PC-3 (cell line): ENCODE measurements at regions of chr5 and their contacts with region 1.

Region 1: GRCh38 chr5:109191153-109191558 is 218.6 kb downstream of the PJA2 start:
- DNase-seq: peak; percentile 54
- ATAC-seq: peak; percentile 73
- H3K4me3 ChIP-seq: no peak overlapping the region
- H3K27ac ChIP-seq: no peak overlapping the region
- H3K4me1 ChIP-seq: peaks cover 11% of the 10 kb centered on the region
- H3K27me3 ChIP-seq: no peaks in the 10 kb centered on the region
- CTCF ChIP-seq: no peak

Region 2: DNA sequence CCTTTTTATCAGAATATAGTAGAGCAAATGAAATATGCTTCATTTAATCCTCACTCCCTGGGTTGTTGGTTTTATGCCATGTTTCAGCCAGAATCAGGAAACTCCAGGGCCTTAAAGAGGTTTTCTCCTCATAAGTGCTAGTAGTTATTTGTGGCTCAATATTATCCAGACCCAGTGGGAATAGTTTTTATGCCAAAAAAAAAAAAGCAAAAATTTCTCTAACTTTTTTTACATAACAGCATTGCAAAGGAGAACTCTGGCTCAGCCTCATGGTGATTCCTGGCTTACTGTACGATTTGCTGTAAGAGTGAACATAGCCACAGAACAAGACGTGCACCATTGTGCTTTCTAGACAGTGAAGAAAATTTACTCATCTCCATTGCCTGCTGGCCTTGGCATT is 13.9 kb before region 1 on chr5:
- CTCF ChIA-PET with region 1: no interaction called
- POLR2A ChIA-PET with region 1: no interaction called
- intact Hi-C with region 1: no loop called
- DNase-seq: no peak
- ATAC-seq: no peak
- H3K4me3 ChIP-seq: no peak overlapping the region
- H3K27ac ChIP-seq: no peak overlapping the region
- H3K4me1 ChIP-seq: no peaks in the 10 kb centered on the region
- H3K27me3 ChIP-seq: no peaks in the 10 kb centered on the region
- CTCF ChIP-seq: no peak

Region 3: DNA sequence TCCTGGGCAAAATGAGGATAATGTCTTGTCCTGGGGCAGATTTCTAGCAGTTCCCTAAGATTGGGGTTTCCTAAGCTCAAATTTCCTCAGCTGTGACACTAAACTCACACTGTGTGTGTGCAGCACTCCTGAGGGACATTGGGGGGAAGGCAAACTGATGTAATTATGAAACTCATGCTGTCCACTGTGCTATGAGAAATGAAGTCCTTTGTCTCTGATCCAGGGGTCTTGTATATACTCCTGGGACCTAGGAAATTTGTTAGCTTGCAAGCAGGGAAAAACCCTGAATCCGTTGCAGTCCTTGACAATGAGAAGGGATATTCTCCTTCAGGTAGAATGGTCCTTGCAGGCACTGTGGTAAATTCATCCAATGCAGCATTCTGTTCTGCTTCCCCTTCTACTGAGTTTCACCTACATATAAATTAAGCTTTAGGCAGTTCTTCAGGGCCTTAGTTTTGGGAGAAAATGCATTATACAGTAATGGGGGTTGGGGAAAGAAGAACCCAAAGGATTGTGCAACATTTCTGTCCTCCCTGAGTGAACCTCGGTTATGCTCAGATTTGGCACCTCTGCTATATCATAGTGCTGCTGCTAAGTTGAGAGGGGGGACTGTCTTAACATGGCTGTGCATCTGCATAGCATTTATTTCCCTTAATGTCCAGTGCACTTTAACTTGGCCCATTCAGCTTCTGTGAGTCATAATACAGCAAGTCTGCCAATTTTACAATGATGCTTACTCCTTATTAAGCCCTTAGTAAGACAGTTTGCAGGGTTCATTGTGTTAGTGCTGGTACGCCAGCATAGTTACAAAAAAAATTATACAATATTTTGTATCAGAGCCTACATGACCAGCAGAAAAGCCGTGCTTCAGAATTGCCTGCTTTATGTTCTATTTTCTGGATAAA is 138.4 kb after region 1 on chr5:
- CTCF ChIA-PET with region 1: no interaction called
- POLR2A ChIA-PET with region 1: no interaction called
- intact Hi-C with region 1: loop called (anchors 5 kb)
- DNase-seq: peak; percentile 65
- ATAC-seq: peak; percentile 77
- H3K4me3 ChIP-seq: no peak overlapping the region
- H3K27ac ChIP-seq: no peak overlapping the region
- H3K4me1 ChIP-seq: peaks cover 17% of the 10 kb centered on the region
- H3K27me3 ChIP-seq: no peaks in the 10 kb centered on the region
- CTCF ChIP-seq: no peak

Region 4: DNA sequence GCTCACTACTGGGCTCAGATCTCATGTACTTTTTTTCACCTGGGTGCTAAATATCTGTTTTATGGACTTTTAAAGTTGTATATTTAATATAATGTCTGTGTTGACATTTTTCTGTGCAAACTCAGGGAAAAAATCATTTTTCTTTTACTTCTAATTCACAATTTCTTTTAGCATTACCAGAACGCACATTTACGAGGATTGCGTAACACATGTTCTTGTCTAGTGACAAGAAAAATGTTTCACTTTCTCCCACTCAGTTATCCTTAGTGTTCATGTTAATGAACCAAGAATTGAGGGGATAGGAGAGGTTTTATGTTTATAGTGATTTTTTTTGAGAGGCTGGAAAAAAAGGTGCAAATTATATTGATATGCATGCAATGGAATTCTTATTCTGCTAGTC is 305.0 kb after region 1 on chr5:
- CTCF ChIA-PET with region 1: no interaction called
- POLR2A ChIA-PET with region 1: no interaction called
- intact Hi-C with region 1: no loop called
- DNase-seq: no peak
- ATAC-seq: no peak
- H3K4me3 ChIP-seq: no peak overlapping the region
- H3K27ac ChIP-seq: no peak overlapping the region
- H3K4me1 ChIP-seq: peaks cover 9% of the 10 kb centered on the region
- H3K27me3 ChIP-seq: no peaks in the 10 kb centered on the region
- CTCF ChIP-seq: no peak

Region 5: DNA sequence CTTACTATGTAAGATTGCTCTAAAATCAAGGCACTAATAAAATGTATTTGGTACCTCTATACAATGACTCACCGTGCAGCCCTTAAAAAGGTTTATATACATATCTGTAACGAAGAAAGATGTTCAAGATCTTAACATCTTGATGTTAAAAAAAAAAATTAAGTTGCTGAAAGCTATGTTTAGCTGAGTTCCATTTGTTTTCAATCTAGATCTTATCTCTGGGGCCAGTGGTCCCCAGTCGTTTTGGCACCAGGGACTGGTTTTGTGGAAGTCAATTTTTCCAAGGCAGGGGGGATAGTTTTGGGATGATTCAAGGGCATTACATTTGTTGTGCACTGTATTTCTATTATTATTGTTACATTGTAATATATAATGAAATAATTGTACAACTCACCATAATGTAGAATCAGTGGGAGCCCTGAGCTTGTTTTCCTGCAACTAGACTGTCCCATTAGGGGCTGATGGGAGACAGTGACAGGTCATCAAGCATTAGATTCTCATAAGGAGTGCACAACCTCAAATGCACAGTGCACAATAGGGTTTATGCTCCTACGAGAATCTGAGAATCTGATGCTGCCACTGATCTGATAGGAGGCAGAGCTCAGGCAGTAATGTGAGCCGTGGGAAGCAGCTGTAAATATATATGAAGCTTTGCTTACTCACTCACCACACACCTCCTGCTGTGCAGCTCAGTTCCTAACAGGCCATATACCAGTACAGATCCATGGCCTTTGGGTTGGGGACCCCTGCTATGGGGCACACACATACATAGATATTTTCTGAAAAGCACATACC is 1852.8 kb after region 1 on chr5:
- CTCF ChIA-PET with region 1: no interaction called
- POLR2A ChIA-PET with region 1: no interaction called
- intact Hi-C with region 1: no loop called
- DNase-seq: peak; percentile 77
- ATAC-seq: peak; percentile 100
- H3K4me3 ChIP-seq: no peak overlapping the region
- H3K27ac ChIP-seq: peak overlapping the region; percentile 62
- H3K4me1 ChIP-seq: peaks cover 14% of the 10 kb centered on the region
- H3K27me3 ChIP-seq: no peaks in the 10 kb centered on the region
- CTCF ChIP-seq: no peak